PC-9 (cell line): ENCODE measurements at regions of chr3 and their contacts with region 1.

Region 1: DNA sequence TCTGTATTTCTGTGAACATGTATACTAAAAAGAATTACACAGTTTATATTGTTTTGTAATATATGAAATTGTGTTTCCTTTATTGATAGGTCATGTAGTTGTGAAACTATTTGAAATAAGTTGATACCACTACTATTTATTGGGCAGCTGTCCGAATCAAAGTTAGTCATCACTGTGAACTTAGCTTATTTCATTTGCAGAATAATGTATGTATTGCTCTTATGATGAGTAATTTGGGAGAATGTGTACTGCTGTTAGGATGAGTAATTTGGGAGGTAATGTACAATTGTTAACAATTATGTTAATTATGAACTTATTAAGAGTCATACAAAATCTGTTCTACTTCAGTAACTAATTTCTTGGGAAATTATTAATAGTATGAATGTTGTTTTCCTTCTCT is 22.2 kb downstream of the FXR1 start:
- DNase-seq: no peak
- H3K4me3 ChIP-seq: no peak overlapping the region
- H3K27ac ChIP-seq: no peak overlapping the region
- H3K4me1 ChIP-seq: no peaks in the 10 kb centered on the region
- H3K27me3 ChIP-seq: no peaks in the 10 kb centered on the region
- CTCF ChIP-seq: no peak

Region 2: DNA sequence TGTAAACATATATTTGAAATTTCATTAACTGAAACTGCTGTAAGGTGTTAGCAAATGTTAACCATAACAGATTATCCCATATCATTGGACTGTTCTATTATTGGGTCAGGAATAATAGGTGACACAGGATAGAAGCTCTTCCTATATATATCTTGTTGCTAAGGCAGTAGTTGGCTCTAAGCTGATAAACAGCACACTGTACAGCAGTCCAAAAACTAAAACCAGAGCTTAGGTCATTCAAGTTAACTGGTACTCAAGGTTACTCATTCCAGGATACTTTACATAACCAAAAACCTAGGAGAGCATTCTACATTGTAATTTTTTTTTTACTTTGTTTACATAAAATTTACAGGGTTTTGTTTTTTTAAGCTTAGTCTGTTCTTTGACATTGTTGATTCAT is 46.0 kb after region 1 on chr3:
- CTCF ChIA-PET with region 1: no interaction called
- POLR2A ChIA-PET with region 1: no interaction called
- intact Hi-C with region 1: loop called (anchors 5 kb)
- DNase-seq: no peak
- H3K4me3 ChIP-seq: no peak overlapping the region
- H3K27ac ChIP-seq: no peak overlapping the region
- H3K4me1 ChIP-seq: no peaks in the 10 kb centered on the region
- H3K27me3 ChIP-seq: no peaks in the 10 kb centered on the region
- CTCF ChIP-seq: no peak

Region 3: DNA sequence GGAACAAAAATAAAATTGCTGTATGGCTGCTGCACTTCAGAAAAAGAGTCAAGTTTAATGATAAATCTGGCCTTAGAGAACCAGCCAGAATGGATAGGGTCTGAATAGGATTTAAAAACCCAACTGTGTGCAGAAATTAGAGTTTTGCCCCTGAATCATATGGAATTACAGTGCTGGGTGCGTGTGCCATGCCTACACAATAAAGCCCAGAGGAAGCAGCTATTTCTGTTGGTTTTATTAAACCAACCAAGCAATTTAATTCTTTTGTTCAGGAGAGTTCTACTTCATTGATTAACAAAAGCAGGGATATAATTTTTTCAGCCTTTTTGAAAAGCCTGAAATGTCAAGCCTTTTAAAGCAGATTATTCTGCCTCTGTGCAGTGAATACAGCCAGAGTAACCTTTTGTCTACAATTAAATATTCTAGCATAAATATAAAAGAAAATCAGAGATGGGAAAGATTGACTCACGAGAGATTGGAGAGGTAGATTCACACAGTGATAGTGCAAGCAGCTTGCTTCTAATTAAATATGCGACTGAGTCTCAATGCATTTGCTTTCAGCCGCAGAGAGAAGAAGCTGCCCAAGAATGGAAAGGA is 121.6 kb after region 1 on chr3:
- CTCF ChIA-PET with region 1: no interaction called
- POLR2A ChIA-PET with region 1: no interaction called
- intact Hi-C with region 1: no loop called
- DNase-seq: no peak
- H3K4me3 ChIP-seq: no peak overlapping the region
- H3K27ac ChIP-seq: no peak overlapping the region
- H3K4me1 ChIP-seq: no peaks in the 10 kb centered on the region
- H3K27me3 ChIP-seq: no peaks in the 10 kb centered on the region
- CTCF ChIP-seq: no peak